Aorta (tissue), 5 donors: ENCODE measurements at regions of chr3 and their contacts with region 1.

Region 1: DNA sequence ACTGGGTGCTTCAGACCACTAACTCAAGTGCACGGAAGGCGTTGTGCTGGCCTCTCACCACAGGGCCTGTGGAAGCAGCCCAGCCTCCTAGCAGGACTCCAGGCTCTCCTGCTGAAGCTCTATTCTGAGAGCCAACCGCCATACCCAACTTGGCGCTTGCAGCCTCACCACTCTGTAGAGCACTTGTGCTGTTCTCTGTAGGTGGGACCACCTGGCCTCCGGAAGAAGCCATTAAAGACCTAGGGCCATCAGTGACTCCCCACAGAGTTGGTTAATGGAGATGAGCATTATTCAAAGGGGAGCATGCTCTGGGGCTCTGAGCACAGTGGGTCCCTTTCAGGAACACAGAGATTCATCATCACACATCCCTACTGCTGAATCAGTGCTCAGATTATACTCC is 50.9 kb downstream of the C3orf85 start:
- DNase-seq: no peak
- ATAC-seq: no peak
- H3K4me3 ChIP-seq: no peak overlapping the region
- H3K27ac ChIP-seq: no peak overlapping the region
- H3K4me1 ChIP-seq: no peaks in the 10 kb centered on the region
- H3K27me3 ChIP-seq: no peaks in the 10 kb centered on the region

Region 2: GRCh38 chr3:108879916-108880315 is 307.5 kb before region 1 on chr3:
- intact Hi-C with region 1: no loop called
- DNase-seq: no peak
- ATAC-seq: no peak
- H3K4me3 ChIP-seq: no peak overlapping the region
- H3K27ac ChIP-seq: no peak overlapping the region
- H3K4me1 ChIP-seq: no peaks in the 10 kb centered on the region
- H3K27me3 ChIP-seq: no peaks in the 10 kb centered on the region

Region 3: GRCh38 chr3:109211941-109212340 is 24.6 kb after region 1 on chr3:
- intact Hi-C with region 1: loop called in 1 of 2 experiments (anchors 1 kb)
- DNase-seq: no peak
- ATAC-seq: no peak
- H3K4me3 ChIP-seq: no peak overlapping the region
- H3K27ac ChIP-seq: no peak overlapping the region
- H3K4me1 ChIP-seq: no peaks in the 10 kb centered on the region
- H3K27me3 ChIP-seq: no peaks in the 10 kb centered on the region